Caco-2 (cell line): ENCODE measurements at regions of chr12 and their contacts with region 1.

Region 1: GRCh38 chr12:7667125-7667524 is 1.4 kb upstream of the APOBEC1 start:
- DNase-seq: peak in 1 of 2 experiments; percentile 42
- H3K4me3 ChIP-seq: no peak overlapping the region
- H3K4me3 Mint-ChIP-seq: no peak overlapping the region
- H3K27ac Mint-ChIP-seq: no peak overlapping the region
- H3K4me1 ChIP-seq: peaks cover 13% of the 10 kb centered on the region
- H3K4me1 Mint-ChIP-seq: peaks cover 7% of the 10 kb centered on the region
- H3K27me3 ChIP-seq: no peaks in the 10 kb centered on the region
- H3K27me3 Mint-ChIP-seq: no peaks in the 10 kb centered on the region
- CTCF ChIP-seq: peak; percentile 48 to 55

Region 2: DNA sequence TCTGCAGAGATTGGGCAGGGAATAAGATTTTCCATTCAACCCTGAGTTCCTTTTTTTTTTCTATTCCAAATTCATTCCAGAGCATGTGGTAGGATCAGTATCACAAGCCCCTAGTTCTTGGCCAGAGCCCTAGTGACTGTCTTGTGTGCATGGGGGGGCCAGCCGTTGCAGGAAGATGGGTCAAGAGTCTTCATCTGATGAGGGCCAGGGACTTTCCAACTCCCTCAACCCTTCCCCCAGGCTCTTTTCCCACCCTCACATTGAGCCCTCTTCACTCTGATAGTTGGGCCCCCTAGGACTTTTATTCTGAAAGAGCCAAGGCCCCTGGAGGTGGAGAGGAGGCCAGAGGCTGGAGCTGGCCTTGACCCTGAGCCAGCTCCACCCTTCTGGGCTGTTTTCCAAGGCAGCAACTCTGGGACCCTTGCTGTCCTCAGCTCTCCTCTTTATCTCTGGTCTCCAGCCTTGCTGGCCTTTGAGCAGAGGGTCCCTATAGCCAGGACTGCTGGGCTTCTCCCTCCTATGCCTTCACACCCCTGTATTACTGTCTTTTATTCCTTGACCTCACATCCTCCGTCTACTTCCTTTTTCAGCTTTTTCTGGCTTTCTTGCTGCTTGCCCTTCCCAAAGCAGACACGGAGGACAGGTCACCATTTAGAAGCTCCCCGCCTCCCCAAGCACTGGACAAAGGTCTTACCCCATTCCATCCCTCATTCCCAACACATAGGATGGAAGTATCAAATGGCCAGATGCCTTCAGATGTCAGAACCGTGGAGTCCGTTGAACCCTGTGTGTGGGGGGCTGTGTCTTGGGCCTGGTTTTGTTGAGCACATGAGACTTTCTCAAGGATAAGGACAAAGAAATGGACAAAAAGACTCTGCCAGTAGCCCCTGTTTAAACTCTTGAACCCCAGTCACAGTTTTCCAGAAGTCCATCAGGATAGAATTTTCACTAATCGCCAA is 544.0 kb before region 1 on chr12:
- CTCF ChIA-PET with region 1: no interaction called
- POLR2A ChIA-PET with region 1: no interaction called
- intact Hi-C with region 1: no loop called
- DNase-seq: peak in 1 of 2 experiments; percentile 33
- H3K4me3 ChIP-seq: no peak overlapping the region
- H3K4me3 Mint-ChIP-seq: no peak overlapping the region
- H3K27ac Mint-ChIP-seq: no peak overlapping the region
- H3K4me1 ChIP-seq: peaks cover 23% of the 10 kb centered on the region
- H3K4me1 Mint-ChIP-seq: peaks cover 35% of the 10 kb centered on the region
- H3K27me3 ChIP-seq: no peaks in the 10 kb centered on the region
- H3K27me3 Mint-ChIP-seq: no peaks in the 10 kb centered on the region
- CTCF ChIP-seq: no peak

Region 3: GRCh38 chr12:7612851-7613250 is 54.3 kb before region 1 on chr12:
- CTCF ChIA-PET with region 1: no interaction called
- POLR2A ChIA-PET with region 1: no interaction called
- intact Hi-C with region 1: loop called (anchors 2 kb)
- DNase-seq: no peak
- H3K4me3 ChIP-seq: no peak overlapping the region
- H3K4me3 Mint-ChIP-seq: no peak overlapping the region
- H3K27ac Mint-ChIP-seq: no peak overlapping the region
- H3K4me1 ChIP-seq: no peaks in the 10 kb centered on the region
- H3K4me1 Mint-ChIP-seq: no peaks in the 10 kb centered on the region
- H3K27me3 ChIP-seq: no peaks in the 10 kb centered on the region
- H3K27me3 Mint-ChIP-seq: peaks cover 13% of the 10 kb centered on the region
- CTCF ChIP-seq: no peak

Region 4: DNA sequence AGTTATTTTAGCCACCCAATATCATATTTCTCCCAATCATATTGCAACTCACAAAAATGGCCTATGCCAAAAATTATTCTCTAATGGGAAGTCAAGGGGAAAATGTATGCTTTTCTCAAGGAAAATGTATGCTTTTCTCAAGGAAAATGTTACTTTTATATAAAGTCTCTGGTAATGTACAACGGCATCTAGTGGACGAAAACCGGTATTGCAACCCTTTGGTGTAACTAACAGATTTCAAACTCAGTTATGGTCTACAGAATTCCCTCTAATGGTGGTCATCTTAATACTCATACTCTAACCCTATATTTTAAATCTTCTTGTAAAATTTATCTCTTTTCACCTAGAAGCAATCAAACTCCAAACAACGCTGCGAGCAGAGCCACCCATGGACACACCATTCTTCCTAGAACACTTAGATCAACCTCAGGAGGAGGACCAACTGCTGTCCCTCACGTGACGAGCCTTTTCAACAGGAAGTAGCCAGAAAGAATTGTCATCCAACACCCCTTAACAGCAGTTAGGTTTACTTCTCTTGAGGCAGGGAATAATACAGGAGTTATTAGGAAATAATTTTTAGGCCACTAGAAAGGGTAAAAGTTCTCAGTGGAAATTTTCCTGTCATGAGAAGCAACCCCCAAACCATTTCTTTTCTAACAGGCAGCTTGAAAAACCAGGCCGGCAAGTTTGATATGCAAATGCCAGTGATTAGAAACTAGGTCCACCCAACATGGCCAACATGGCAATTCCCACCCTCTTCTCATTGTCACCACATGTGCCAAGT is 21.5 kb before region 1 on chr12:
- CTCF ChIA-PET with region 1: no interaction called
- POLR2A ChIA-PET with region 1: no interaction called
- intact Hi-C with region 1: loop called (anchors 1 kb)
- DNase-seq: peak in 1 of 2 experiments; percentile 48
- H3K4me3 ChIP-seq: no peak overlapping the region
- H3K4me3 Mint-ChIP-seq: no peak overlapping the region
- H3K27ac Mint-ChIP-seq: no peak overlapping the region
- H3K4me1 ChIP-seq: peaks cover 35% of the 10 kb centered on the region
- H3K4me1 Mint-ChIP-seq: peaks cover 37% of the 10 kb centered on the region
- H3K27me3 ChIP-seq: no peaks in the 10 kb centered on the region
- H3K27me3 Mint-ChIP-seq: no peaks in the 10 kb centered on the region
- CTCF ChIP-seq: peak; percentile 91 to 94